ENCODE measurements at regions of chr22 and their contacts with region 1.

Region 1: GRCh38 chr22:32265882-32266767 is 11.0 kb upstream of the SLC5A4 start:
- DNase-seq: peak; percentile 78
- H3K4me3 Mint-ChIP-seq: no peak overlapping the region
- H3K27ac Mint-ChIP-seq: no peak overlapping the region
- H3K4me1 Mint-ChIP-seq: peaks cover 6% of the 10 kb centered on the region
- H3K27me3 Mint-ChIP-seq: peaks cover 3% of the 10 kb centered on the region

Region 2: DNA sequence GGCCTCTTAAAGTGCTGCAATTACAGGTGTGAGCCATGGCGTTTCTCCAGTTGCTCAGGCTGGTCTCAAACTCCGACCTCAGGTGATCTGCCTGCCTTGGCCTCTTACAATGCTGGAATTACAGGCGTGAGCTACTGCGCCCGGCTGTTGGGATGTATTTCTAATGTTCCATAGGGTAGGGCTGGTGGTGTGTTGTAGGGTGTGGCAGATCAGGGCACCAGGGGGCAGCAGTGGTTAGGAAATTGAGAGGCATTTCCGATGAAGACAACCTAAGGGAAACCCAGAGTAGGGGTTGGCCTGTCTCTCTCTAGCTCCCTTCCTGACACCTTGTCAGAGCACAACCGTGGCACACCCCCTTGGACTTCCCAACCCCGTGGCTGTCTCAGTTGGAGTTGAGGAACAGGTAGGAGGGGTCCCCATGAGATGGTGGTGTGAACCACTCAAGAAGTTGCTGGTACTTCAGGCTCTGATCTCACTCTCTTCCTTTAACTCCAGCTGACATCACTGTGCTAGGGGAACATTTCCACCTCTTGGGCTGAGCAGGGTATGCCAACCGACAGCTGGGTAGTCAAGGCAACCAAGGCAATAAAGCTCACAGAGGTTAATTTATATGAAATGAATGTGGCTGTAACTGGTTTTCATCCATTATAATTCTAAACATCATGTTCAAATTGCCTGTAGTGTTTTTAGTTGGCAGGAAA is 288.8 kb before region 1 on chr22:
- CTCF ChIA-PET with region 1: interaction called, 11 read pairs
- DNase-seq: peak; percentile 88
- H3K4me3 Mint-ChIP-seq: no peak overlapping the region
- H3K27ac Mint-ChIP-seq: no peak overlapping the region
- H3K4me1 Mint-ChIP-seq: peaks cover 5% of the 10 kb centered on the region
- H3K27me3 Mint-ChIP-seq: peaks cover 17% of the 10 kb centered on the region

Region 3: DNA sequence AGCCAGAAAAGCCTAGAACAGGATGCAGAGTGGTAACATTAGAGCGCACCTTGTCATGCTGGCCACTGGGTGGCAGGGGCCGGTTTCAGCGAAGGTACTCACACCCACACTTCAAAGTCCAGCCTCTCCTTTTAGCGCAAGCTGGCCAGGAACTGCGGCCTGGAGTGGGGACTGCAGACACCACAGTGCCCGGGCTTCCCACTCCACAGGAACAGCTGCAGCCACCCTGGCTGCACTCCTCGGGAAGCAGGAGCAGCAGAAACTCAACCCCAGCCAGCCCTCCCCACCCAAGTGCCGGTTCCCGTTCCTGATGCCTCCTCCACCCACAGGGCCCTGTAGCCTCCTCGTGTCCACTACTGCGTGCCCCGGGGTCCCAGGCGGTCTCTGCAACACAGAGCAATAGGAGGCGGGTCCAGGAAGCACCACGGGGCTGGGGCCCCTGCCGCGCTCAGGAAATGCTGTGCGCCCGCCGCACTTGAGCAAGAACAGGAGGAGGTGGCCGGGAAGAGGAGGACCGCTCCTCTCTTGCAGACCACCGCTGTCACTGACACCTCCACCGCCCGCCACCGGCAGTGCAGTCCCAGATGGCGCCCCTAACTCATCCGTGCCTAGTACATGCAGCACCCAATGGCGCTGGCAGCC is 63.5 kb before region 1 on chr22:
- CTCF ChIA-PET with region 1: interaction called, 14 read pairs
- DNase-seq: peak; percentile 55
- H3K4me3 Mint-ChIP-seq: peak overlapping the region; percentile 63
- H3K27ac Mint-ChIP-seq: no peak overlapping the region
- H3K4me1 Mint-ChIP-seq: peaks cover 62% of the 10 kb centered on the region
- H3K27me3 Mint-ChIP-seq: peaks cover 66% of the 10 kb centered on the region

Region 4: DNA sequence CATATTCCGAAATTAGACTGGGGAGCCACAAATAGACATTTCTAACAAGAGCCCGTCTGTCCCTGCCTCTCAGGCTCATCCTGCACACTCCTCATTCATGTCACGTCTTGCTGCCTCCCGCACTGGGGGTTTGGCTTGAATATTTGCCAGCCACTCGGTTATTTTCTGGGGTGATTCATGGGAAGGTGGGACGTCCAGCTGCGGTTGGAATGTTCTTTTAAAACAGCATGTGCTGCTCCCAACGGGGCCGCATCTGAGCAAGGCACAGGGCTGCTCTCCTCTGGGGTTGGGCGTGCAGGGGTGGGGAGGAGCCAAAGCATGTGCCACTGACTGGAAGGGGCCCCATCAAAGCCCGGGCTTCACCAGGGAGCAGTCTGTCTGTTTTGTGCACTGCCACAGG is 14.9 kb after region 1 on chr22:
- CTCF ChIA-PET with region 1: interaction called, 11 read pairs
- DNase-seq: no peak
- H3K4me3 Mint-ChIP-seq: no peak overlapping the region
- H3K27ac Mint-ChIP-seq: no peak overlapping the region
- H3K4me1 Mint-ChIP-seq: no peaks in the 10 kb centered on the region
- H3K27me3 Mint-ChIP-seq: peaks cover 24% of the 10 kb centered on the region